MCF 10A (cell line): ENCODE measurements at regions of chrX and their contacts with region 1.

Region 1: DNA sequence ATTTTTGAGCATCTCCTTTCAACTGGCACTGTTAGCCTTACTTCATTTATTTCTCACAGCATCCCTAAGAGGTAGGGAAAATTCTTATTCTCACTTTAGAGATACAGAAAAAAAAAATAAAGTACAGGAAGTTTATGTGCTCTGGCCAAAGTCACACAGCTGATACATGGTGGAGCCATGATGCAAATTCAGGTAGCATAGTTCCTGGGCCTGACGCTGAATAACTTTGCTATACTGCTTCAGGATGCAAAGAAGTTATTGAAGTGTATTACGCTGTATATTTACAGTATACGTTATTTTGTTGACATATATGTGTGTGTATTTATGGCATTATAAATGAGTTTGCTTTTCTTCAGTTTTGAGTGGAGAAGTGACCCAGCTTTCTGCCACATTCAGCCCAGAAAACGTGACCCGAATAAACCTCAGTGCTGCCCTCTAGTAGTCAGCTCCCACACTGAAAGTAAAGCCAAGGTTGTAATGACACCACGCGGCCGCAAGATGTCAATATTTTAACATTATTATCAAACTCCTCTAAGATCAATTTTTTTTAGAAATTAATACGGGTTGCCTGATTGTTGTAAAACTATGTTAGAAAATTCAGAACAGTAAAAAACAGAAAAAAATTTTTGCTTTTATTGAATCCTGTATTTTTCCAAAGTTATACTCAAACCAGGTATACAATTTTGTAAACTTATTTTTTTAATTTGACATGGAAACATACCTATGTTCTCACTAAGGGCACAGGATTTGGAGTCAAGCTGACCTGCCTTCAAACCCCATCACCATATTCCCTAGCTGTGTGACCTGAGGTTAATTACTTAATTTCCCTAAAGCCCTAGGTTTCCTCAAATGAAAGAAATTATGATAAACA is 3.8 kb upstream of the GUCY2F start:
- DNase-seq: peak; percentile 76
- H3K4me3 Mint-ChIP-seq: no peak overlapping the region
- H3K27ac Mint-ChIP-seq: no peak overlapping the region
- H3K4me1 Mint-ChIP-seq: no peaks in the 10 kb centered on the region
- H3K27me3 Mint-ChIP-seq: peaks cover 42% of the 10 kb centered on the region
- CTCF ChIP-seq: peak; percentile 98

Region 2: DNA sequence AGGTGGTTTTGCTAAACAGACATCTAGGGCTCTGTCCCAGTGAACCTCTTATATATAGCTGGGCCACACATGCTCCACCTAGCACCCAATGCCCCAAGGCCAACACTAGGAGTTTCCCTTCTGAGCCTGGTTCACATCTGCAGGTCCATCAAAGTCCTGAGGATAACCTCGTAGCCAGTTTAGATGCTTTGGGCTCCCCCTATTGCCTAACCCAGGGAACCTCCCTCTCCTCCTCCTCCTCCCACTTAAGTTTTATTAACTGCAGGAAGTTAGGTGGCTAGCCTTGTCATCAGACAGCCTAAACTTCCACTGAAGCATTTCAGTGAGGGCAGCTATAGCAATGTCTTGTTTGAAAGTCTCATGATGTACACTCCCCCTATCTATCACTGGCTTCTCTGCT is 91.8 kb before region 1 on chrX:
- CTCF ChIA-PET with region 1: no interaction called
- POLR2A ChIA-PET with region 1: no interaction called
- intact Hi-C with region 1: no loop called
- DNase-seq: peak; percentile 33
- H3K4me3 Mint-ChIP-seq: no peak overlapping the region
- H3K27ac Mint-ChIP-seq: no peak overlapping the region
- H3K4me1 Mint-ChIP-seq: no peaks in the 10 kb centered on the region
- H3K27me3 Mint-ChIP-seq: peaks cover 65% of the 10 kb centered on the region
- CTCF ChIP-seq: no peak

Region 3: DNA sequence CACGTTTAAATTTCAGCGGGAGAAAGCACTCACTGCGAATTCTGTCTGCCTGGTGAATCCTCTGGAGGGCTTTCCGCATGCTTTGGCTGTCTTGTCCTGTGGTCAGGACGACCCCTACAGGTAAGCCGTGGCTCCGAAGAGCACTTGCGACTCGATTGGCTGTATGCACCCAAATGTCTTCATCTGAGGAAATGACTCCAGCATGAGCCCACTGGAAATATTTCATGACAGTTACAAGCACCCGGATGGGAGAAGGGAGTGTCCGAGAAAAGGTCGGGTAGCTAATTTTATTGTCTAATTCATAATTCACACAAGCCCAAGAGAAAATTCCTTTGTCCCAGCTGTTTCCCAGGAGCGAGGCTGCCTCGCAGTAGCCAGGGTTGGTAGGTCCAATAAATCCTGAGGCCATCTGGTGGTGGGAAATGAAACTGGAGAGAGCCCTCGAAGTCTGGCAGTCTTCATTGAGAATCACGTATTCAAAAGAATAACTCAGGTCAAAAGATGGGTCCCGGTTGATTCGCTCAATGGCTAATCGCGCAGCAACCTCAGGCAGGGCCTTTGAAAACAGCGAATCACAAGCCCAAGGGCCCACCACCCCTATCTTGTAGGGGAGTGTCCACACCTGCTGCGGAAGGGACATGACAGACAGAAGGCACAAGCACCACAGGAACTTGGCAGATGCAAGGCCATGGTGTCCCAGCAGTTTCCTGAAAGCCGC is 10.4 kb before region 1 on chrX:
- CTCF ChIA-PET with region 1: interaction called, 52 read pairs
- POLR2A ChIA-PET with region 1: no interaction called
- intact Hi-C with region 1: no loop called
- DNase-seq: peak; percentile 54
- H3K4me3 Mint-ChIP-seq: no peak overlapping the region
- H3K27ac Mint-ChIP-seq: no peak overlapping the region
- H3K4me1 Mint-ChIP-seq: peaks cover 9% of the 10 kb centered on the region
- H3K27me3 Mint-ChIP-seq: peaks cover 21% of the 10 kb centered on the region
- CTCF ChIP-seq: peak; percentile 19

Region 4: GRCh38 chrX:109536439-109537336 is 51.0 kb after region 1 on chrX and contains the start of gene NXT2:
- CTCF ChIA-PET with region 1: interaction called, 14 read pairs
- POLR2A ChIA-PET with region 1: interaction called, 7 read pairs
- intact Hi-C with region 1: no loop called
- DNase-seq: peak; percentile 86
- H3K4me3 Mint-ChIP-seq: peak within 1 kb of the TSS; percentile 96
- H3K27ac Mint-ChIP-seq: peak within 1 kb of the TSS; percentile 95
- H3K4me1 Mint-ChIP-seq: peaks cover 13% of the 10 kb centered on the region
- H3K27me3 Mint-ChIP-seq: peaks cover 36% of the 10 kb centered on the region
- CTCF ChIP-seq: no peak
- total RNA-seq, gene NXT2: 6.9 and 9.6 TPM in 2 replicates

Region 5: GRCh38 chrX:109635176-109635575 is 149.5 kb after region 1 on chrX:
- CTCF ChIA-PET with region 1: interaction called, 97 read pairs
- POLR2A ChIA-PET with region 1: interaction called, 4 read pairs
- intact Hi-C with region 1: loop called (anchors 1 kb)
- DNase-seq: peak; percentile 31
- H3K4me3 Mint-ChIP-seq: no peak overlapping the region
- H3K27ac Mint-ChIP-seq: no peak overlapping the region
- H3K4me1 Mint-ChIP-seq: no peaks in the 10 kb centered on the region
- H3K27me3 Mint-ChIP-seq: peaks cover 23% of the 10 kb centered on the region
- CTCF ChIP-seq: no peak

Region 6: DNA sequence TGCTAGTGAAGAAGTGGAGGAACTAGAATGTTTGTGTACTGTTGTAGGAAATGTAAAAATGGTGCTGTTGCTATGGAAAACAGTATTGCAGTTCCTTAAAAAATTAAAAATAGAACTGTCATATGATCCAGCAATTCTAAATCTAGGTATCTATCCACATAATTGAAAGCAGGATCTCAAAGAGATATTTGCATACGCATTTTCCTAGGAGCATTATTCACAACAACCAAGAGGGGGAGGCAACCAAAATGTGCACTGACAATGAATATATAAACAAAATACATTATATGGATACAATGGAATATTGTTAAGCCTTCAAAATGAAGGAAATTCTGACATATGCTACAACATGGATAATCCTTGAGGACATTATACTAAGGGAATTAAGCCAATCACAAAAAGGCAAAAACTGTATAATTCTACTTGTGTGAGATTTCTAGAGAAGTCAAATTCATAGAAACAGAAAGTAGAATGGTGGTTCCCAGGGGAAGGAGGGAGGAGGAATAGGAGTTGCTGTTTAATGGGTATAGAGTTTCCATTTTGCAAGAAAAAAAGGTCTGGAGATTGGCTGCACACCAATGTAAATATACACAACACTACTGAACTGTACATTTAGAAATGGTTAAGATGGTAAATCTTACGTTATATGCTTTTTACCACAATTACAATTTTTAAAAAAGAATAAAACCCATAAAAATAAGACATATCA is 174.9 kb after region 1 on chrX:
- CTCF ChIA-PET with region 1: no interaction called
- POLR2A ChIA-PET with region 1: no interaction called
- intact Hi-C with region 1: no loop called
- DNase-seq: no peak
- H3K4me3 Mint-ChIP-seq: no peak overlapping the region
- H3K27ac Mint-ChIP-seq: no peak overlapping the region
- H3K4me1 Mint-ChIP-seq: no peaks in the 10 kb centered on the region
- H3K27me3 Mint-ChIP-seq: peaks cover 69% of the 10 kb centered on the region
- CTCF ChIP-seq: no peak

Region 7: GRCh38 chrX:109714340-109714958 is 228.7 kb after region 1 on chrX:
- CTCF ChIA-PET with region 1: interaction called, 3 read pairs
- POLR2A ChIA-PET with region 1: no interaction called
- intact Hi-C with region 1: loop called (anchors 5 kb)
- DNase-seq: peak; percentile 61
- H3K4me3 Mint-ChIP-seq: no peak overlapping the region
- H3K27ac Mint-ChIP-seq: no peak overlapping the region
- H3K4me1 Mint-ChIP-seq: peaks cover 10% of the 10 kb centered on the region
- H3K27me3 Mint-ChIP-seq: no peaks in the 10 kb centered on the region
- CTCF ChIP-seq: no peak